Mammary epithelial cell (primary cell): ENCODE measurements at regions of chr19 and their contacts with region 1.

Region 1: GRCh38 chr19:588093-588740 is 1.5 kb upstream of the HCN2 start:
- DNase-seq: peak; percentile 75
- H3K4me3 ChIP-seq: no peak overlapping the region
- H3K27ac ChIP-seq: no peak overlapping the region
- H3K4me1 ChIP-seq: peaks cover 17% of the 10 kb centered on the region
- H3K27me3 ChIP-seq: peaks cover 14% of the 10 kb centered on the region
- CTCF ChIP-seq: peak; percentile 44 to 75

Region 2: GRCh38 chr19:737581-738093 is 149.4 kb after region 1 on chr19:
- CTCF ChIA-PET with region 1: no interaction called
- dilution Hi-C with region 1: no loop called
- in situ Hi-C with region 1: loop called in 1 of 2 experiments (anchors 25 kb)
- intact Hi-C with region 1: loop called (anchors 1 kb)
- DNase-seq: no peak
- H3K4me3 ChIP-seq: no peak overlapping the region
- H3K27ac ChIP-seq: no peak overlapping the region
- H3K4me1 ChIP-seq: no peaks in the 10 kb centered on the region
- H3K27me3 ChIP-seq: no peaks in the 10 kb centered on the region
- CTCF ChIP-seq: peak; percentile 47 to 63